Mammary epithelial cell (primary cell): ENCODE measurements at regions of chr1 and their contacts with region 1.

Region 1: GRCh38 chr1:10909697-10910671 is 102.5 kb upstream of the TARDBP start:
- DNase-seq: peak; percentile 27
- H3K4me3 ChIP-seq: no peak overlapping the region
- H3K27ac ChIP-seq: no peak overlapping the region
- H3K4me1 ChIP-seq: peaks cover 9% of the 10 kb centered on the region
- H3K27me3 ChIP-seq: no peaks in the 10 kb centered on the region
- CTCF ChIP-seq: peak; percentile 41 to 79

Region 2: DNA sequence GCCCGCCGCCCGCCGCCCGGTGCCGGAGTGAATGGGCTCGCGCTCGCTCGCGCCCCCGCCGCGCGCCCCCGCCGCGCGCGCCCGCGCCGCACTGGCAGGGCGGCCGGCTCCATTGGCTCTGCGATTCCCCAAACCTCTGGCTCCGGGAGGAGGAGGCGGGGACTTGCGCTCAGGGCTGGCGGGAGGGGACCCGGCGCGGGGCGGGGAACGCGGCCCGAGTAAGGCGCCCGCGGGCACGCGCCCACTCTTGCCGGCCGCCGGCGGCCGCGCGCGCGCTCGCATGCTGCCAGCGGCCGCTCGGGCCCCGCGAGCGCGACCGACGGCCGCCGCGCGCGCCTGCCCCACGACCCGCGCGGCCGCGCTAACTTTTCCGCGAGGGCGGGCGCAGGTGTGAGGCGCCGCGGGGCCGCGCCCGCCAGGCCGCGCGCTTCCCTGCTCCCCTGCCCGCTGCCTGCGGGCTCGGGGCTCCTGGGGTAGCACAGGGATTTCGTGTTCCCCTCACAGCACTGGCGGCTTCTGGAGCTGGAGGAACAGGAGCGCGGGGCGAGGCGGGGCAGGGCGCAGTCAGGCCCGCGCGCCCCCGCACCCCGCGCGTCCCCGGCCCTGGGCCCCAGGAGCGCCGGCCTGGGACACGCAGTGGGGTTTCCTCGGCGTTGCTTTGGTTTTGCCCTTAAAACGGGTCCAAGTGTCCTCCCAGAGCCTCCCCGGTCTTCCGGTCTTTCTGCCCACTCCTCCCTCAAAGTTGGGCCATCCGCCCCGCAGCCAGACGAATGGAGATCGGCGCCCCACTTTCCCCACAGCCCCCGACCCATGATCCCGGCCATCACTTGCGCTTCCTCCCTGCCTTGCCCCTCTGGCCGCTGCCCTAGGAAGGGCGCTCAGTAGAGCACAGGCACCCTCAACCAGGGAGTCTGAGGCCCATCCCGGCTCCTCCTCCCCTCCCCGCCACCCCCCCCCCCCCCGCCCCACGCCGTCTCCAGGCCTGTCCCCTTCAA is 215.1 kb before region 1 on chr1:
- CTCF ChIA-PET with region 1: no interaction called
- dilution Hi-C with region 1: no loop called
- in situ Hi-C with region 1: no loop called
- intact Hi-C with region 1: loop called (anchors 2 kb)
- DNase-seq: peak; percentile 78
- H3K4me3 ChIP-seq: peak overlapping the region in 2 of 3 experiments; percentile 42 to 53
- H3K27ac ChIP-seq: no peak overlapping the region
- H3K4me1 ChIP-seq: peaks cover 16% of the 10 kb centered on the region
- H3K27me3 ChIP-seq: no peaks in the 10 kb centered on the region
- CTCF ChIP-seq: no peak

Region 3: GRCh38 chr1:10851024-10852013 is 58.7 kb before region 1 on chr1:
- CTCF ChIA-PET with region 1: no interaction called
- dilution Hi-C with region 1: loop called (anchors 5 kb)
- in situ Hi-C with region 1: no loop called
- intact Hi-C with region 1: no loop called
- DNase-seq: no peak
- H3K4me3 ChIP-seq: no peak overlapping the region
- H3K27ac ChIP-seq: no peak overlapping the region
- H3K4me1 ChIP-seq: no peaks in the 10 kb centered on the region
- H3K27me3 ChIP-seq: no peaks in the 10 kb centered on the region
- CTCF ChIP-seq: no peak

Region 4: GRCh38 chr1:10950316-10951172 is 40.6 kb after region 1 on chr1:
- CTCF ChIA-PET with region 1: no interaction called
- dilution Hi-C with region 1: loop called (anchors 5 kb)
- in situ Hi-C with region 1: no loop called
- intact Hi-C with region 1: no loop called
- DNase-seq: no peak
- H3K4me3 ChIP-seq: no peak overlapping the region
- H3K27ac ChIP-seq: no peak overlapping the region
- H3K4me1 ChIP-seq: no peaks in the 10 kb centered on the region
- H3K27me3 ChIP-seq: no peaks in the 10 kb centered on the region
- CTCF ChIP-seq: no peak

Region 5: DNA sequence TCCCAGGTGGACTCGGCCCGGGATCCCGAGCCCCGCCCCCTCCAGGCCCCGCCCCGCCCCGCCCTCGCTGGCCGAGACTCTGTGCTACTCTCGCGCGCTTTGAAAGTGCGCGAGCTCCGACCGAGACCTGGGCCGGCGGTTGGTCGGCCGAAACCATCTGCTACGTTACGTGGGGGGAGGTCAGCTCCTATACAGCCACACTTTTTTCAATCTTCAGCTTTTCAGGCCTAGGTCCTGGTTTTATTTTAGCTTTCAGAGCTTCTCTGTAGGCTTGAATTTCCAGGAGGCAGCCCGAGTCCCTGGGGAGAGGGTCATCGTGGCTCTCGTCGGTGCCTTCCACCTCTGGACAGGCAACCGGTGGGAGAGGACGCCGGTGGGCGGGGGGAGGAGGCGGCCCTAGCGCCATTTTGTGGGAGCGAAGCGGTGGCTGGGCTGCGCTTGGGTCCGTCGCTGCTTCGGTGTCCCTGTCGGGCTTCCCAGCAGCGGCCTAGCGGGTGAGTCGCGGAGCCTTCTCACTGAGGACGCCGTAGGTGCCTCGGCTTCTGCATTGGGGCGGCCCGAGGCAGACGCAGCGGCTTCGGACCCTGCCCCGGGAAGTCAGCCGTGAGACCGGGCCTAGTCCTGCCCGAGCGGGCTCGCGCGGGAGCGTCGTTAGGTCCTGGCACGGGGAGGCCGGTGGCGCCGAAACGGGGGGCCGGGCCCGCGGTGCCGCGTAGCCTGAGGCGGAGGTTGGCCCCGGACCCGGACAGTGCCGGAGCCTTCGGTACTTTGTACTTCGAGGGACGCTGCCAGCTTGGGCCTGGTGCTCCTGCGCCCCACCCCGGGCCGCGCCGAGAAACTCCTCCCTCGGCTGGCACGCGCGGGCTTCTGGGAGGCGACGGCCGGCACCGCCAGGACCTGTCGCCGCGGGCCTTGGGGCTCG is 102.5 kb after region 1 on chr1 and contains the start of gene TARDBP:
- CTCF ChIA-PET with region 1: no interaction called
- dilution Hi-C with region 1: loop called (anchors 5 kb)
- in situ Hi-C with region 1: no loop called
- intact Hi-C with region 1: no loop called
- DNase-seq: peak; percentile 90
- H3K4me3 ChIP-seq: peak within 1 kb of the TSS; percentile 79 to 97 (median 79)
- H3K27ac ChIP-seq: peak within 1 kb of the TSS; percentile 97
- H3K4me1 ChIP-seq: peaks cover 17% of the 10 kb centered on the region
- H3K27me3 ChIP-seq: no peaks in the 10 kb centered on the region
- CTCF ChIP-seq: no peak
- total RNA-seq, gene TARDBP: 32.2 to 122 TPM

Region 6: GRCh38 chr1:11434506-11434905 is 524.5 kb after region 1 on chr1:
- CTCF ChIA-PET with region 1: no interaction called
- dilution Hi-C with region 1: no loop called
- in situ Hi-C with region 1: no loop called
- intact Hi-C with region 1: no loop called
- DNase-seq: no peak
- H3K4me3 ChIP-seq: no peak overlapping the region
- H3K27ac ChIP-seq: no peak overlapping the region
- H3K4me1 ChIP-seq: no peaks in the 10 kb centered on the region
- H3K27me3 ChIP-seq: no peaks in the 10 kb centered on the region
- CTCF ChIP-seq: no peak